Caco-2 (cell line): ENCODE measurements at regions of chrX and their contacts with region 1.

Region 1: DNA sequence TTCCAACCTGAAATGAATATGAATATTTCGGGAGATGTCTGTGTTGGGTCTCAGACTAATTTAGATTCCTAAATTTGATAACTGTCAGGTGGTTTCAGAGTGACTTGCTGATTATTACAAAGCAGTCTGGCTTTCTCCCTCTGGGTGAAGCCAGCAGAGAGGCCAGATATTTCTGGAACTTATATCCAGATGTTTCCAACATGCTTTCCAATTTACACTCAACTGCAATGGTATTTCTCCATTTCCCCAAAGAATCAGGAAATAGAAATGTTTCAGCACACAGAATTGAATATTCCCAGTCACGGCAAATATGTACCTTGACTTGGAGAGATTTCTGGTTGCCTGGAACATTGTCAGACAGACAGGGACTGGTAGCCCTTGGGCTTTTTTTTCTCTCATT is 48.5 kb upstream of the EGFL6 start:
- DNase-seq: no peak
- H3K4me3 ChIP-seq: no peak overlapping the region
- H3K4me3 Mint-ChIP-seq: no peak overlapping the region
- H3K27ac Mint-ChIP-seq: no peak overlapping the region
- H3K4me1 ChIP-seq: no peaks in the 10 kb centered on the region
- H3K4me1 Mint-ChIP-seq: no peaks in the 10 kb centered on the region
- H3K27me3 ChIP-seq: no peaks in the 10 kb centered on the region
- H3K27me3 Mint-ChIP-seq: no peaks in the 10 kb centered on the region
- CTCF ChIP-seq: no peak

Region 2: DNA sequence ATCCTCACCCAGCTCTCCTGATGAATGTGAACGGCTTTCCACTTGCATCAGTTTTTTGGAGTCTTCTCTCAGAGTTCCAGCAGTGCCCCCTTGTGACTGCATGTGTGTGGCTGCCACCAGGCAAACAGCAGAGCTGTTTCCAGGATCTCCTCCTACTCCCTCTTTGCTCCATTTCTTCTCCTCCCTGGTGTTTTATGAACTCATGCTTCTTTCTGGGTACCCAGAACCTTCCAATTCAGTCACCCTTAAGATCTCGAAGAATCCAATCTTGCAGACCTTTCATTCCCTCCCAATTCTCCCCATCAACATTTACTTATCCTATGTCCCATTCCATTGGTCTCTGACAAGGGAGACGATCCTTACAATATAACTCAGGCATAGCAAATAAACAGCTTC is 125.2 kb after region 1 on chrX:
- CTCF ChIA-PET with region 1: interaction called, 3 read pairs
- POLR2A ChIA-PET with region 1: no interaction called
- intact Hi-C with region 1: loop called (anchors 5 kb)
- DNase-seq: peak; percentile 44 to 63
- H3K4me3 ChIP-seq: no peak overlapping the region
- H3K4me3 Mint-ChIP-seq: no peak overlapping the region
- H3K27ac Mint-ChIP-seq: no peak overlapping the region
- H3K4me1 ChIP-seq: no peaks in the 10 kb centered on the region
- H3K4me1 Mint-ChIP-seq: peaks cover 6% of the 10 kb centered on the region
- H3K27me3 ChIP-seq: no peaks in the 10 kb centered on the region
- H3K27me3 Mint-ChIP-seq: no peaks in the 10 kb centered on the region
- CTCF ChIP-seq: peak; percentile 48 to 61

Region 3: DNA sequence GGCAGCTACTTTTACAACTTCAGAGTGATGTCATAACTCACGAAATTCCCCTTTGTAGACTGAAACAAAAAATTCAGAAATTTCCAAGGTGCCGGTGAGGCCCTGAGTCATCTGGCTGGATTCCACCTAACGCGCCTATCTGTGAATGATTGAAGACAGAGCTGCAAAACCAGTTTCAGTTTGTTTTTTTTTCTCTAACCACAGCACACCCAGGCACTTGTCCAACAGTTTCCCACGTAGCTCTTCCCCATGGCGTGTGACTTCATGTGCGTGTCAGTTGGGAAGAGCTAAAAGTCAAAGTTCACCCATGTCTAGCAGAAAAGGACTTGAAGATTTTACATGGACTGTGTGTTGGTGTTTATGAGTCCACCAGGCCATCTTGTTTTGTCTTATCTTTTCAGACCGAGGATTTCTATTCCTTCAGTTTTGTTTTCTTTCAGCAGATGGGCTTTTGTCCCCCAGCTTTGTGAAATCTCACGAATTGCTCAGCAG is 148.4 kb after region 1 on chrX:
- CTCF ChIA-PET with region 1: no interaction called
- POLR2A ChIA-PET with region 1: no interaction called
- intact Hi-C with region 1: no loop called
- DNase-seq: peak; percentile 82 to 86
- H3K4me3 ChIP-seq: no peak overlapping the region
- H3K4me3 Mint-ChIP-seq: peak overlapping the region; percentile 55
- H3K27ac Mint-ChIP-seq: peak overlapping the region; percentile 85
- H3K4me1 ChIP-seq: peaks cover 27% of the 10 kb centered on the region
- H3K4me1 Mint-ChIP-seq: peaks cover 12% of the 10 kb centered on the region
- H3K27me3 ChIP-seq: no peaks in the 10 kb centered on the region
- H3K27me3 Mint-ChIP-seq: no peaks in the 10 kb centered on the region
- CTCF ChIP-seq: no peak

Region 4: DNA sequence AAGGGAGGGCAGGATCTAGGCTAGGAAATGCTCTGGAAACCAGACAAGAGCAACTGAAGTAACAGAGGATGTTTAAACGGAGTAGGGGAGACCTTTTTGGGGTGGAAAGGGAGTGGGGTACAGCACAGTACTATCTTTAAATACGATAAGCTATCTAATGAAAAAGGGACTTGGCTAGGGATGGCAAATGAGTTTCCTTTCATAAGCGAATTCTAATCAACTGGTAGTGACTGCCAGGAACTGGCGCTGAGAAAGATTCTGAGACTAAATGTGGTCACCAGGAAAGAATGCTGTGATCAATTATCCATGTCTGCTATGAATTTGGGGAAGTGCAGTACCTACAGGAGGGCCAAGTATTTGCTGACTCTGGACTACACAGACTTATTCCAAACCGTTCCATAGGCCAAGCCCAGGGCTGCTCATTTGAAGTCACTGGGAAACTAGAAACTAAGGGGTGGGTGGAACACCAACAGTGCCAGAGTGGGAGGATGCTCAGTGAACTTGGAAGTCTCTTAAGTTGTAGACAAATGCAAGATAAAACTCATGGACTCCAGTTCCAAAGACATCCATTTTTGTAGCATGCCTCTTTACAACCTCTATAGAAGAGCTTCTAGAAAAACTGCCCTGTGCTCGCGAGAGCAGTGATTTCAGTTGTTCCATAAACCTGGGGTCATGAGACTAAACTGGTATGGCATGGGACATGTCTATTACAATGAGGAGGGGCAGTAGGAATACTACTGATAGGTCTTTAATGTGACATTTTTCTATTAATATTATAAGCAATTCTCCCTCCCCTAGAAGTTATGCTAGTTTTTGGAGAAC is 211.5 kb after region 1 on chrX:
- CTCF ChIA-PET with region 1: no interaction called
- POLR2A ChIA-PET with region 1: no interaction called
- intact Hi-C with region 1: no loop called
- DNase-seq: no peak
- H3K4me3 ChIP-seq: no peak overlapping the region
- H3K4me3 Mint-ChIP-seq: peak overlapping the region; percentile 33
- H3K27ac Mint-ChIP-seq: peak overlapping the region; percentile 60
- H3K4me1 ChIP-seq: no peaks in the 10 kb centered on the region
- H3K4me1 Mint-ChIP-seq: peaks cover 20% of the 10 kb centered on the region
- H3K27me3 ChIP-seq: no peaks in the 10 kb centered on the region
- H3K27me3 Mint-ChIP-seq: no peaks in the 10 kb centered on the region
- CTCF ChIP-seq: no peak